Ascending aorta (tissue), 2 donors: ENCODE measurements at regions of chrX and their contacts with region 1.

Region 1: DNA sequence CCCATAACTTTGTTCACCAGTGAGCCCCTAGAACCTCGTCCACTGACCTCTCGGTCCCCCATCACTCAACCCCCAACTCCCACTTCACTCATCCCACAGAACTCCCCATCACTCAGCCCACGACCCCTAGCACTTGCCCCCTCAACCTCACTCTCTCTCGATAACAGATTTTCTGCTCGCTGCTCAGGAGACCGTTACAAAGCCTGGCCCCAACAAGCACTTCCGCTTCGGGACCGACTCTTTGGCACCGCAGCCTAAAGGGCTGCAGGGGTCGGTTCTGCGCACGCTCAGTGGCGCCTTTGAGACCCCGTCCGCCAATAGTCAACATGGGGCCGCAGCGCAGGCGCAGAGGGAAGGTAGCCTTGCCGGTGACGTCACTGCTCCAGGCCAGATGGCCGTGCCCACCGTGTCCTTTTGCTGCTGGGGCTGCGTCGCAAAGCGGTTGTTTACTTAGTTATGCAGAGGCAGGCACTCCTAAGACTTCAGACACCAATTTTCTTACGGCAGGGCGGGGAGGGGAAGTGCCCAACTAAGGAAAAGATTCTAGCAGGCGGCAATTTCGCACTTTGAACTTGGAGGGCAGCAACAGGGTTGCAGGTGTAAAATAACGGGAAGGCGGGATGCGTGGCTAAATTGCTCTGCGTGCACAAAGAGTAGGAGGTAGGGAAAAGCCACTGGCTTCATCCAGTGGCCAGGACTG is at the start of gene ZNF182:
- DNase-seq: peak; percentile 82 to 97
- H3K4me3 ChIP-seq: peak within 1 kb of the TSS; percentile 60 to 79
- H3K27ac ChIP-seq: peak within 1 kb of the TSS; percentile 57 to 66
- H3K4me1 ChIP-seq: no peaks in the 10 kb centered on the region
- H3K27me3 ChIP-seq: no peaks in the 10 kb centered on the region
- CTCF ChIP-seq: no peak
- total RNA-seq, gene ZNF182: 0.11 TPM

Region 2: GRCh38 chrX:47836164-47837072 is 167.5 kb before region 1 on chrX and contains the start of gene ZNF81:
- intact Hi-C with region 1: loop called (anchors 5 kb)
- DNase-seq: peak; percentile 89 to 98
- H3K4me3 ChIP-seq: peak within 1 kb of the TSS; percentile 46 to 67
- H3K27ac ChIP-seq: peak within 1 kb of the TSS; percentile 44 to 48
- H3K4me1 ChIP-seq: no peaks in the 10 kb centered on the region
- H3K27me3 ChIP-seq: no peaks in the 10 kb centered on the region
- CTCF ChIP-seq: no peak
- total RNA-seq, gene ZNF81: 2.8 TPM